Ovary (tissue), 10 donors: ENCODE measurements at regions of chr14 and their contacts with region 1.

Region 1: DNA sequence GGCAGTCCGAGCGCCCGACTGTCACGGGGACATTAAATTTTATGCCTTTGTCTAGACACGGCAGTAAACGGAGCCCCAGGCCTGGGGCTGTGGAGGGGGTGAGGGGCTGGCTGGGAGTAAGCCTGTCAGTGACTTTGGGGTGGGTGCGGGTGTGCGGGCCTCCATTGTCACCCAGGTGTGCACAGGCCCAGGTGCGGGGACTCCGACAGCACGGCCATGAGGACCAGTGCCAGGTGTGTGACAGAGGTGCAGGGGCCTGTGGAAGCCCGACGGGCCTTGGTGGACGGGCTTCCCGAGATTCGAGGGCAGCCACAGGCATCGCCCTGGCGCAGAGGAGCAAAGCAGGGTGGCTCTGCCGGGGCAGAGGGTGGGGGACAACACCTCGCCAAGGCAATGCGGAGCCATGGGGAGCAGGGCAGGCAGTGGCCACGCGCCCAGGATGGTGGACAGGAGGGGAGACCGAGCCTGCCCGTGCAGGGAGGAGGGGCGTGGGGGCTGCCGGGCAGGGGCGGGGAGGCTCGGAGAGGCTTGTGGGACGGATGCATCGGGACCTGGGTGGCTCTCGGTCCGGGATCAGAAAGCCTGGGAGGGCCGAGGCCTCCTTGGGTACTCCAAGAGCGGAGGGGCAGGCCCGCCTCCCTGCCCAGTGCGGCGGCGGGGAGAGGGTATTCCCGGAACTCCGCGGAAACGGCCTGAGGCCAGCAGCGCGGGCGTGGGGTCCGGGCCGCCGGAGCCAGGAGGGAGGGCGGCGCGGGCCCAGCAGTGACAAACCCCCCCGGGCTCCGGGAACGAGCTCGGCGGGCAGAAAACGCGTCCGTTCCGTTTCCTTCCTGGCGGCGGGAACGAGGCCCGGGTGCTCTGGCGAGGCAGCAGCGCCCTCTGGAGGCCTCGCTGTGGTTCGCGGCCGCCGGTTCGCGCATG is 1.5 kb downstream of the TMEM121 start:
- DNase-seq: peak; percentile 71 to 89 (median 80)
- H3K4me3 ChIP-seq: peak overlapping the region; percentile 60
- H3K27ac ChIP-seq: peak overlapping the region in 1 of 2 donors; percentile 53
- H3K4me1 ChIP-seq: peaks cover 10% of the 10 kb centered on the region
- H3K27me3 ChIP-seq: no peaks in the 10 kb centered on the region
- CTCF ChIP-seq: peak; percentile 76 to 86 (median 85)
- EP300 ChIP-seq: no peak
- POLR2A ChIP-seq: no peak

Region 2: DNA sequence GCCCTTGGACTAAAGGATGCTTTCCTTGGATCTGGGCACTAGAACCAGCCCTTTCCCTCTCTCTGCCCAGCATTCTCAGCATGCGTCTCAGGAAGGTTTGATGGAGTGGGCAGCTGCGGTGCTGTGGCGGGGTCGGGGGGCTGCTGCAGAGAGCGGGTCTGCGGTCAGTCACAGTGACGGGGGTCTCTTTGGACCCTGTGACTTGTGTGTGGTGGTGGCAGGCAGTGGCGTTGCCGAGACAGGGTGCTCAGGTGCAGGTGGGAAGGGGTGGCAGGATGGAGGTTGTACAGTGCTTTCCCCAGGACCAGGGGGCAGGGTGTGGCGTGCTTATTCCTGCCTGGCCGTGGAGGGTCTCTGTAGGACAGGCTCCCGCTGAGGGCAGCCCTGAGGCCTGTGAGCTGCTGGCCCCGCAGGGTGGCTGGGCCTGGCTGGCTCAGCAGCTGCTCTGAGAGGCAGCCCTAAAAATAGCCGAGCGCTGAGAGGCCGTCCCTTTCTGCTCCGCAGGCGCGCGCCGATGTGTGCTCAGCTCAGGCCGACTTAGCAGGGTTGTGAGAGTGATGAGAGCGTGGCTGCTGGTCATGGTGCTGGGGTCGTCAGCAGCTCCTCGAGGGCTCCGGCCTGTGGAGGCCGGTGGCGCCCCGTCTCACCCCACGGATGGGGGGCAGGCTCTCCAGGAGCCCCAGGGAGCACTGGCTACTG is 203.7 kb before region 1 on chr14:
- intact Hi-C with region 1: no loop called
- DNase-seq: no peak
- H3K4me3 ChIP-seq: no peak overlapping the region
- H3K27ac ChIP-seq: no peak overlapping the region
- H3K4me1 ChIP-seq: peaks cover 25% of the 10 kb centered on the region
- H3K27me3 ChIP-seq: no peaks in the 10 kb centered on the region
- CTCF ChIP-seq: no peak
- EP300 ChIP-seq: no peak
- POLR2A ChIP-seq: no peak

Region 3: DNA sequence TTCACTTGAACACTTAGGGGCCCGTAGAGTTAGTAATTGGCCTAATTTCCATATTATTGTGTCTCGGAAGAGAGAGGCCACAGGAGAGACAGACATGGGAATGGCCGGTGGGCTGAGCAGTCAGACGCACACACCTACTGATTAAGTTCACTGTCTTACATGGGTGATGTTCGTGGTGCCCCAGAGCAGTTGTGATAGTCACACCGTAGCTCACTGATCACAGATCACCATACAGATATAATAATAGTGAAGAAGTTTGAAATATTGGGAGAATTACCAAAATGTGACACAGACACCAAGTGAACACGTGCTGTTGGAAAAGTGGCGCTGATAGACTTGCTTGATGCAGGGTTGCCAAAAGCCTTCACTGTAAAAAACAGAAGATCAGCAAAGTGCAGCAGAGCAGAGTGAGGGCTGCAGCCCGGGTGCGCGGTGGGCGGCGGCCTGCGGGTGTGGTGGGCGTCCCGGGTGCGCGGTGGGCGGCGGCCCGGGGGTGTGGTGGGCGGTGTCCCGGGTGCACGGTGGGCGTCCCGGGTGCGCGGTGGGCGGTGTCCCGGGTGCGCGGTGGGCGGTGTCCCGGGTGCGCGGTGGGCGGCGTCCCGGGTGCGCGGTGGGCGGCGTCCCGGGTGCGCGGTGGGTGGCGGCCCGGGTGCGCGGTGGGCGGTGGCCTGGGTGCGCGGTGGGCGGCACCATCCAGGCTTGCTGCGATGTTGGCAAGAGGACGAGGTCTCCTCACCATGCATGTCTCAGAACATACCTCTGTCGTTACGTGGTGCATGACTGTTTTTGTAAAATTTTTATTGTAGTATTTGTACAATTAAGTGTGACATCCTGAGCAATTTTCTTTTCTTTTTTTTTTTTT is 163.8 kb before region 1 on chr14:
- intact Hi-C with region 1: loop called in 1 of 4 experiments (anchors 10 kb)
- DNase-seq: peak in 2 of 5 donors; percentile 11 to 22
- H3K4me3 ChIP-seq: no peak overlapping the region
- H3K27ac ChIP-seq: no peak overlapping the region
- H3K4me1 ChIP-seq: peaks cover 2% of the 10 kb centered on the region
- H3K27me3 ChIP-seq: no peaks in the 10 kb centered on the region
- CTCF ChIP-seq: no peak
- EP300 ChIP-seq: no peak
- POLR2A ChIP-seq: no peak

Region 4: DNA sequence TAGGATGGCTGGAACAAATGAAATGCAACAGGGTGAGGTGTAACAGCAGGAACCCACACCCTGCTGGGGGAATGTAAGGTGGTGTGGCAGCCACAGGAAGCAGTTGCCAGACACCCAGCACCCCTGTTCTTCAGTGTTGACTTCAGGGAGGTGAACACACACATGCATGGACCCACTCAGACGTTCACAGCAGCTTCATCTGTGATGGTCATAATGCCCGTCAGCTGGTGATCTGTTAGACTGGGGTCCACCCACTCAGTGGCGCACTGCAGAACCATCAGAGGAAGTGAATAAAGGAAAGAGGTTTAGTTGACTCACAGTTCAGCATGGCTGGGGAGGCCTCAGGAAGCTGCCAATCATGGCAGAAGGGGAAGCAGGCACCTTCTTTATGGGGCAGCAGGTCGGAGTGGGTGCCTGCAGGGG is 152.3 kb before region 1 on chr14:
- intact Hi-C with region 1: loop called in 1 of 4 experiments (anchors 10 kb)
- DNase-seq: no peak
- H3K4me3 ChIP-seq: no peak overlapping the region
- H3K27ac ChIP-seq: no peak overlapping the region
- H3K4me1 ChIP-seq: no peaks in the 10 kb centered on the region
- H3K27me3 ChIP-seq: no peaks in the 10 kb centered on the region
- CTCF ChIP-seq: no peak
- EP300 ChIP-seq: no peak
- POLR2A ChIP-seq: no peak

Region 5: DNA sequence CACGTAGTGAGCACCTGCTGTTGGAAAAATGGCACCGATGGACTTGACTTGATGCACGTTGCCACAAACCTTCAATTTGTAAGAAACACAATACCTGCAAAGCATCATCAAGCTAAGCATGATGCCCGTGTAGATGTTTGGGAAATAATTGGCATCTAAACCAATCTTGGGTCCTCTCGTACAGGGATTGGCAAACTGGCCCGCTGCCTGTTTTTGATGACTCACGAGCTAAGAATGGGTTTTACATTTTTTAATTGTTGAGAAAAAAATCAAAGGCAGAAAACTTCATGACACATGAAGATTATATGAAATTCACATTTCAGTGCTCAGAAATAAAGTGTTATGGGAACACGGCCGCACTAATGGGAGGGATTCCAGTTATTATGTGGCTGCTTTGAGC is 97.4 kb before region 1 on chr14:
- intact Hi-C with region 1: no loop called
- DNase-seq: peak in 1 of 5 donors; percentile 31
- H3K4me3 ChIP-seq: no peak overlapping the region
- H3K27ac ChIP-seq: no peak overlapping the region
- H3K4me1 ChIP-seq: peaks cover 3% of the 10 kb centered on the region
- H3K27me3 ChIP-seq: no peaks in the 10 kb centered on the region
- CTCF ChIP-seq: no peak
- EP300 ChIP-seq: no peak
- POLR2A ChIP-seq: no peak